Mammary epithelial cell (primary cell): ENCODE measurements at regions of chr3 and their contacts with region 1.

Region 1: DNA sequence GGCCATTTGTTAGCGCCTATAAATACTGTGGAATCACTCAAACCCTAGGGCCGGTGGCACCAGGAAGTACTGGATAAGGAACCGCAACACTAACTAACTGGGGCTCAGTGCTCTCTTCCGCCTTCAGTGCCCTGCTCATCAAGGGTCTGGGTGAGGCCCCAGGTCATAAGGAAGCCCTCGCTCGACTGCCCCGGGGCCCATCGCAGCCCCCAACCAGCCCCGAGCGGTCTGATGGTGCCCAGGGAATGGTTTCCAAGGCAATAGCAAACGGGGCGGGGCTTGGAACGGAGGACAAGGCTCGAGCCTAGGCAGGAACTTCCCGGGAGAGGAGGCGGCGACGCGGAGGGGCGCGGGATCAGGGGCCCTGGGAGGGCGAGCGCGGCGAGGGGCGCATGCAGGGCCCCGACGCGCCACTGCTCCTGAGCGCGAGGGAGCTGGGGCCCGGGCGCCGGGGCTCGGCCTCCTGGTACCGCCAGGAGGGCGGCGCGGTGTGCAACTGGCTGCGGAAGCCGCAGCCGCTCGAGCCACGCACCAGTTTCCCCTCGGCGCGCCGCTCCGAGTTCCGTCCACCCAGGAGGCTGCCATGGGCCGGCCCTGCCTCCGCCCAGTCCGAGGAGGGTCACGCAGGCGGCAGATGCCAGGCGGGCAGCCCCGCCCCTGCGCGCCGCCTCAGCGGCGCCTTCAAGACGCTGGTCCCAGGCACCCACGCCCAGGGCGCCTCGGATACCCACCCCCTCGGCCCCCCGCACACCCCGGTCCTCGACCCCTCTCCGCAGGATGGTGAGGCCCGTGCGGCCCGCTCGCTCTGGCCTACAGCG is at the start of gene TTLL3:
- DNase-seq: peak; percentile 38
- H3K4me3 ChIP-seq: peak within 1 kb of the TSS; percentile 32 to 68 (median 49)
- H3K27ac ChIP-seq: peak within 1 kb of the TSS; percentile 49
- H3K4me1 ChIP-seq: peaks cover 9% of the 10 kb centered on the region
- H3K27me3 ChIP-seq: no peaks in the 10 kb centered on the region
- CTCF ChIP-seq: no peak
- total RNA-seq, gene TTLL3: 15.8 to 33.3 TPM

Region 2: DNA sequence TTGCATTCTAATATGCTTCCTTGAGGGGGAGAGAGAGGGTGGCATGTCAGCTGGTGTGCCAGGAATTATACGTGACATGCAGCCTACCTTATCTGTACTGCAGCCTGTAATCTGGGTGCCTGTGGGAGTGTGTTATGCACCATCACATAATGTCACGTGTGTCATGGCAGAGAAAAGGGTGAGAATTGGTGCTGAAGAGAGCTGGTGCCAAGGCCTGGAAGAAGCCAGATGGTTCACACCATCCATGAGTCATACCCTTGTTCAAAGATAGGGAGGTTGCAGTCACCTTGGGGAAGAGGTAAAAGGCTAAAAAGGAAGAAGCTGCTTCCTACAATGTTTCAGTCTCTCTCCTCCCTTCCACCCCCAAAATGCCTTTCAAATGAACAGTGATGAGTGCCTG is 73.0 kb before region 1 on chr3:
- CTCF ChIA-PET with region 1: no interaction called
- dilution Hi-C with region 1: loop called (anchors 5 kb)
- in situ Hi-C with region 1: no loop called
- intact Hi-C with region 1: no loop called
- DNase-seq: no peak
- H3K4me3 ChIP-seq: no peak overlapping the region
- H3K27ac ChIP-seq: no peak overlapping the region
- H3K4me1 ChIP-seq: peaks cover 8% of the 10 kb centered on the region
- H3K27me3 ChIP-seq: no peaks in the 10 kb centered on the region
- CTCF ChIP-seq: no peak

Region 3: GRCh38 chr3:10085736-10086135 is 275.9 kb after region 1 on chr3:
- CTCF ChIA-PET with region 1: no interaction called
- dilution Hi-C with region 1: no loop called
- in situ Hi-C with region 1: no loop called
- intact Hi-C with region 1: no loop called
- DNase-seq: peak; percentile 60
- H3K4me3 ChIP-seq: no peak overlapping the region
- H3K27ac ChIP-seq: no peak overlapping the region
- H3K4me1 ChIP-seq: peaks cover 8% of the 10 kb centered on the region
- H3K27me3 ChIP-seq: no peaks in the 10 kb centered on the region
- CTCF ChIP-seq: no peak